Mammary epithelial cell (primary cell): ENCODE measurements at regions of chr1 and their contacts with region 1.

Region 1: DNA sequence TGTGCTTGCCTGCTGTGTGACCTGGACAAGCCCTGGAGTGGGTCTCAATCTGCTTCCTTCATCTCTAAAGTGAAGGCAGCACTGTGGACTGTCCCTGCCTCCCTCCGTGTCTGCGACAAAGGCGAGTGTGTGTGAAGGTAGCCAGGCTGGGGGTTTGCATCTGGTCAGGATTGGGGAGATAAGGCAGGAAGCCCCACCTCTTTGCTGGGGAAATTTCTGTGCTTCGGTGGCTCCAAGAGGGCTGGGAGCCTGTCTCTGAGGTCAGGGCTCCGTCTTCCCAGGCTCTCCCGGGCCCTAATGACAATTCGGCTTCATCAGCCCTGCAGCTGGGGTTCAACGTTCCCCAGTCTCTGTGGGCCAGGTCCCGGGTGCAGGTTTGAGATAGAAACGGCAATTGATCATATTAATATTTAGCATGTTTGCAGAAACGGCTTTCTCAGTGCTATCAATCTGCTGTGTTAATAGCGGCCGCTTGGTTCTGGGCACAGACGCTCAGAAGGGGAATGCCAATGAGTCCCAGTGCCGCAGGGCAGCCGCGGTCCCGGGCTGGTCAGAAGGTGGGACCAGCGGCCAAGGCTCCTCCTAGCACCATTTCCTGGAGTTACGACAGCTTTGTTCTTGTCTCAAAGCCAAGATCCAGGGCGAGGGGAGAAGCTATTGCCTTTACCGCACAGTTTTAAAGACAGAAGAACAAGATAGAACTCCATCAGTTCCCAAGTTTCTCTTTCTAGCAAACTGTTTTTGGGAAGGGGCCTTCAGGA is 105.7 kb downstream of the PRDM16 start:
- DNase-seq: no peak
- H3K4me3 ChIP-seq: no peak overlapping the region
- H3K27ac ChIP-seq: no peak overlapping the region
- H3K4me1 ChIP-seq: no peaks in the 10 kb centered on the region
- H3K27me3 ChIP-seq: no peaks in the 10 kb centered on the region
- CTCF ChIP-seq: no peak

Region 2: GRCh38 chr1:2817784-2818564 is 356.7 kb before region 1 on chr1:
- CTCF ChIA-PET with region 1: no interaction called
- dilution Hi-C with region 1: loop called (anchors 5 kb)
- in situ Hi-C with region 1: no loop called
- intact Hi-C with region 1: no loop called
- DNase-seq: no peak
- H3K4me3 ChIP-seq: no peak overlapping the region
- H3K27ac ChIP-seq: no peak overlapping the region
- H3K4me1 ChIP-seq: no peaks in the 10 kb centered on the region
- H3K27me3 ChIP-seq: no peaks in the 10 kb centered on the region
- CTCF ChIP-seq: no peak

Region 3: DNA sequence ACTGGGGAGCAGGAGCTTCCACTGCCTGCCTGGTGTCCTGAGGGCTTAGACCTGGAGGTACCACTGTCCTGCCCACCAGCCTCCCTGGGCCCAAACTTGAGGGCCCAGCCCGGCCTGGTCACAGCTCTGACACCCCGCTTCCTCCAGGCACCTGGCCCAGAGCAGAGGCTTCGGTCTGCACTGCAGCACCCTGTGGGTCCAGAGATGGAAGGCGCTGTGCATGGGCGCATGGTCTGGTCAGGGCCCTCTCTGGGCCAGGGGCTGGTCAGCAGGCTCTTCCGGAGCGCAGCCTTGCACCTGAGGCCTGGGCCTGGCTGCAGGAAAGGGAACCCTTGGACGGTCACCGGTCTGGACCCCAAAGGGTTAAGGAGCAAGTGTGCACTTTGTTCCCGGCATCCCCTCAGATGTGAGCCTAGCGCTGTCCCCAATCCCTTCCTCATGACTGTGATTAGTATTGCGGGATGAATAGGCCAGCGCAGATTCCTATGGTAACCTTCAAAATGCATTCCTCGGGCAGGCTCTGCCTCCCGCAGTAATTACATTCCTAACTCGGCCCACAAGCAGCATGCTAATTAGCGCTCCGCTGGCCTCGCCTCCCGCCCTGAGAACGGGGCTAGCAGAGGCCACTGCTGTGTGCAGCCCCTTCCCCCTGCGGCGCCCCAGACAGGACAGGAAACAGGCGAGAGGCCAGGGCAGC is 69.4 kb before region 1 on chr1:
- CTCF ChIA-PET with region 1: no interaction called
- dilution Hi-C with region 1: loop called (anchors 5 kb)
- in situ Hi-C with region 1: no loop called
- intact Hi-C with region 1: no loop called
- DNase-seq: no peak
- H3K4me3 ChIP-seq: no peak overlapping the region
- H3K27ac ChIP-seq: no peak overlapping the region
- H3K4me1 ChIP-seq: no peaks in the 10 kb centered on the region
- H3K27me3 ChIP-seq: no peaks in the 10 kb centered on the region
- CTCF ChIP-seq: no peak

Region 4: DNA sequence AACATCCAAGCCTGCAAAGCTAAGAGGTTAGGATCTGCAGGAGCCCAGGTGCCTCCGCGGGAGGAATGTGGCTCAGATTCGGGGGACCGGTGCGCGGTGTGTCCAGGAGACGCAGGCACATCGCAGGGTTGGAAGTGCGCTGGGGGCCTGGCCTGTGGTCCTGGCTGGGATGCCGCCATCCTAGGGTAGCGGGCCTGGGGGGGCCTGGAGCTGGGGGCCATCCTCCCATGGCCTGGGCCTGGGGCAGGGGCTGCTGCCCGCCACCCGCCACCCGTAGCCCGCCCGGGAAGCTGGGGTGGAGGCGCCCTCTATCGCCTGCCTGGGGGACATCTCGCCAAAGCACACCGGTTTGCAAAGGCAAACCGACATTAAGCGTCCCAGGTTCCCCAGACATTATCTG is 109.2 kb after region 1 on chr1:
- CTCF ChIA-PET with region 1: no interaction called
- dilution Hi-C with region 1: loop called (anchors 5 kb)
- in situ Hi-C with region 1: no loop called
- intact Hi-C with region 1: no loop called
- DNase-seq: no peak
- H3K4me3 ChIP-seq: no peak overlapping the region
- H3K27ac ChIP-seq: no peak overlapping the region
- H3K4me1 ChIP-seq: no peaks in the 10 kb centered on the region
- H3K27me3 ChIP-seq: peaks cover 3% of the 10 kb centered on the region
- CTCF ChIP-seq: no peak